ENCODE measurements at regions of chr6 and their contacts with region 1.

Region 1: DNA sequence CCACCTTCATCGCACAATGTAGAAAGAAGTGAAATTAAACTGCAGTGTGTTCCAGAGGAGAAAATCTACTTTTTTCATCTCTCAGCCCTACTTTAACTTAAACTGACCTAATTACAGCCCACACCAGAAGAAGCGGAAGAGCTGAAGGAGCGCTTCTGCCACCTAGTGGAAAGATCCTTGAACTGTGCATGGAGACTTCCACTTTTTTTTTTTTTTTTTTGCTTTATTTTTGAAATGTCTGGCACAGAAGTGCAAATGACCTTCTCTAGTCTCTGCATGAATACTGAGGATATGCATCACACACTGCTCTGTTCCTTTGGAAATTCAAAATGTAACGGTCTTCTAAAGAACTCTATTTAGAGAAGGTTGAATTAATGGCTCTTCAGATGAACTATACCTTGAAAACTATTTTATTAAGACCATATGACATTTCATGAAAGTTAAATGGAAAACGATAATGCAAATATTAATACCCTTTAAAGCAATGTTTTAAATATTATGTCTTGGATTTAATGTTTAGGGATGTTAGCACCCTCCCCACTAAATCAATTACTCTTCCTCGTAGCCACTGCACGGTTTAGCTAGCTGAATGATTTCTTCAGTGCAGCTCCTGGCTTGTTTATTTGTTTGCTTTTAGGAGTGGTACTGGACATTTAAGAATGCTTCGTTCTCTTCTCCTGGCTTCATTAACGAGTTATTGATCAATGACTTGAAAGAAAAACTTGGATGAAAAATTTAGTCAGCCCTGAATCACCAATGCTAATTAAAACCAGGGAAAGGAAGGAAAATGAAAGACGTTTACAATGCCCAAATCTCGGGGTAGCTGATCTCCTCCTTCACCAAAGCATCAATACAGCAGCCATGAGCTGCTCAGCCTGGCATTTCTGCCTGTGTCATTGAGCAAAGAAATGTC is 569.6 kb upstream of the GJE1 start:
- DNase-seq: peak; percentile 41
- H3K4me3 Mint-ChIP-seq: peak overlapping the region; percentile 56
- H3K27ac Mint-ChIP-seq: peak overlapping the region; percentile 68
- H3K4me1 Mint-ChIP-seq: peaks cover 14% of the 10 kb centered on the region
- H3K27me3 Mint-ChIP-seq: no peaks in the 10 kb centered on the region
- CTCF ChIP-seq: peak; percentile 49

Region 2: DNA sequence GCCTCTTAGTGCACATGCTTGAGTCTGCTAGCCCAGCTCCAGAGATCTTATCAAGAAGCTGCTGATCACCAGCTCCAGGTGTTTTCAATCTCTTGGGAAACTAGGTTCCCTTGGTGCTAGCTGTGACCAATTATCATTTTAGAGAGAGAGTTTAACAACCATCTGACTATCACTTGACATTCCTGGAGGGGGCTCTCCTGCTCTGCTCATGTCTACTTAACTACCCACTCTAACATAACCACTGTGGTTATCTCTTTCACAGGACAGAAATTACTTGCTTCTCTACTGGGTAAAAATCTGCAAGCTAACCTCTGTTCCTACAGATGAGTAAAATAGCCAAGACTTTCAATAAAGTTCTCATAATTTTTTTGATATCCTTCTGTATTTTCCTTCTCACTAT is 253.8 kb before region 1 on chr6:
- CTCF ChIA-PET with region 1: interaction called, 7 read pairs
- intact Hi-C with region 1: loop called (anchors 1 kb)
- DNase-seq: no peak
- H3K4me3 Mint-ChIP-seq: no peak overlapping the region
- H3K27ac Mint-ChIP-seq: no peak overlapping the region
- H3K4me1 Mint-ChIP-seq: peaks cover 8% of the 10 kb centered on the region
- H3K27me3 Mint-ChIP-seq: no peaks in the 10 kb centered on the region
- CTCF ChIP-seq: no peak

Region 3: GRCh38 chr6:141326426-141326825 is 236.7 kb before region 1 on chr6:
- CTCF ChIA-PET with region 1: no interaction called
- intact Hi-C with region 1: loop called (anchors 5 kb)
- DNase-seq: peak; percentile 27
- H3K4me3 Mint-ChIP-seq: peak overlapping the region; percentile 32
- H3K27ac Mint-ChIP-seq: peak overlapping the region; percentile 63
- H3K4me1 Mint-ChIP-seq: no peaks in the 10 kb centered on the region
- H3K27me3 Mint-ChIP-seq: no peaks in the 10 kb centered on the region
- CTCF ChIP-seq: no peak

Region 4: GRCh38 chr6:141587482-141588266 is 24.6 kb after region 1 on chr6:
- CTCF ChIA-PET with region 1: no interaction called
- intact Hi-C with region 1: no loop called
- DNase-seq: no peak
- H3K4me3 Mint-ChIP-seq: no peak overlapping the region
- H3K27ac Mint-ChIP-seq: no peak overlapping the region
- H3K4me1 Mint-ChIP-seq: peaks cover 11% of the 10 kb centered on the region
- H3K27me3 Mint-ChIP-seq: no peaks in the 10 kb centered on the region
- CTCF ChIP-seq: no peak

Region 5: DNA sequence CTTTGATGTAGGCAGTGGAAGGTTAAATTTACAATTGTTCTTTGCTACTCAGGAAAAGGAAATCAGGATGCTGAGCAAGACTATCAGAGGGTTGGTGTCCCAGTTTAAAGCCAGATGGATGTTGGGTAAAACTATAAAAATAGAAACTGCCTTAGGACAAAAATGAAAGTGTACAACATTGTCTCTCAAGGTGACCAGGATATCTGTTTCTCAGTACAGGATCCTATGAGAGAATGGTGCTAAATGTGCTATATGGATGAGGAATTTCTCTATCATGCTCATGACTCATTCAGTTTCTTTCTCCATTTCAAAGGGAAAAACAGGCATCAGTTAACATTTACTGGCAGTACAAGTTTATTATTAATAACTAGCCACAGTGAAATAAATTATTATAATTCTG is 35.4 kb after region 1 on chr6:
- CTCF ChIA-PET with region 1: no interaction called
- intact Hi-C with region 1: no loop called
- DNase-seq: no peak
- H3K4me3 Mint-ChIP-seq: no peak overlapping the region
- H3K27ac Mint-ChIP-seq: no peak overlapping the region
- H3K4me1 Mint-ChIP-seq: no peaks in the 10 kb centered on the region
- H3K27me3 Mint-ChIP-seq: no peaks in the 10 kb centered on the region
- CTCF ChIP-seq: no peak